BJ (cell line): ENCODE measurements at regions of chr20 and their contacts with region 1.

Region 1: DNA sequence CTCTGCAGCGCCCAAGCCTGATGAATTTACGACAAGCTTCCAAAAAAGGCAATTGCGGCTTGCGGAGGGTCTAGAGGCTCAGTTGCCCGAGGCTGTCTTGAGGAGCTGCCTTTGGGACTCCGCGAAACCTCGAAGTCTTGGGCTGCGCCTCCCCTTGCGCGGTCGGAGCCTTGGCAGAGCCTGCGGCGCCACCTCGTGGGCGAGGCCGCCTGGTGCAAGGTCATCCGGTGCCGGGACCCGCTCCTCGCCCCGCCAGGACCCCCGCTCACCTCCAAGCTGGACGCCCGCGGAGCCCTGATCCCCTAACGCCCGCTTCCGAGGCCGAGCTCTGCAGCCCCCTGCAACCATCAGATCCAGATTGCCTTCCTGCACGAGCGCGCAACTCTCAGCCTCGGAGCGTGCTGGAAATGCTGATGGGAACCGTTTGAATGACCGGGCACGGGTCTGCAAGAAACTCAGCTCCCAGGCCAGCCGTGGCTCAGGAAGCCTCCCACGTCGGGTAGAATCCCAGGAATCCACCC is 14.9 kb upstream of the FAM210B start:
- DNase-seq: no peak
- H3K4me3 ChIP-seq: 0 out of 2 replicates have a peak overlapping the region, but pooled peaks have one; percentile 0
- H3K27me3 ChIP-seq: peaks cover 7% of the 10 kb centered on the region; the same call in 1 of the 2 replicates
- CTCF ChIP-seq: peak; percentile 78

Region 2: GRCh38 chr20:56247948-56248782 is 95.8 kb before region 1 on chr20 and contains the start of gene MC3R:
- CTCF ChIA-PET with region 1: interaction called, 20 read pairs
- POLR2A ChIA-PET with region 1: no interaction called
- DNase-seq: no peak
- H3K4me3 ChIP-seq: no peak within 1 kb of the TSS
- H3K27me3 ChIP-seq: no peaks in the 10 kb centered on the region
- CTCF ChIP-seq: peak; percentile 69
- polyA plus RNA-seq, gene MC3R: not detected in 2 replicates